Transverse colon (tissue), 4 donors: ENCODE measurements at regions of chr20 and their contacts with region 1.

Region 1: GRCh38 chr20:34558320-34559218 is at the start of gene MAP1LC3A:
- DNase-seq: peak; percentile 96
- H3K4me3 ChIP-seq: peak within 1 kb of the TSS; percentile 44 to 78 (median 60)
- H3K27ac ChIP-seq: peak within 1 kb of the TSS; percentile 84 to 93 (median 90)
- H3K4me1 ChIP-seq: peaks cover 4 to 15% (median 14%) of the 10 kb centered on the region in 4 donors
- H3K27me3 ChIP-seq: no peaks in the 10 kb centered on the region
- CTCF ChIP-seq: no peak
- EP300 ChIP-seq: no peak
- POLR2A ChIP-seq: peak; percentile 52
- total RNA-seq, gene MAP1LC3A: 41.8 to 166 (median 98.3) TPM

Region 2: DNA sequence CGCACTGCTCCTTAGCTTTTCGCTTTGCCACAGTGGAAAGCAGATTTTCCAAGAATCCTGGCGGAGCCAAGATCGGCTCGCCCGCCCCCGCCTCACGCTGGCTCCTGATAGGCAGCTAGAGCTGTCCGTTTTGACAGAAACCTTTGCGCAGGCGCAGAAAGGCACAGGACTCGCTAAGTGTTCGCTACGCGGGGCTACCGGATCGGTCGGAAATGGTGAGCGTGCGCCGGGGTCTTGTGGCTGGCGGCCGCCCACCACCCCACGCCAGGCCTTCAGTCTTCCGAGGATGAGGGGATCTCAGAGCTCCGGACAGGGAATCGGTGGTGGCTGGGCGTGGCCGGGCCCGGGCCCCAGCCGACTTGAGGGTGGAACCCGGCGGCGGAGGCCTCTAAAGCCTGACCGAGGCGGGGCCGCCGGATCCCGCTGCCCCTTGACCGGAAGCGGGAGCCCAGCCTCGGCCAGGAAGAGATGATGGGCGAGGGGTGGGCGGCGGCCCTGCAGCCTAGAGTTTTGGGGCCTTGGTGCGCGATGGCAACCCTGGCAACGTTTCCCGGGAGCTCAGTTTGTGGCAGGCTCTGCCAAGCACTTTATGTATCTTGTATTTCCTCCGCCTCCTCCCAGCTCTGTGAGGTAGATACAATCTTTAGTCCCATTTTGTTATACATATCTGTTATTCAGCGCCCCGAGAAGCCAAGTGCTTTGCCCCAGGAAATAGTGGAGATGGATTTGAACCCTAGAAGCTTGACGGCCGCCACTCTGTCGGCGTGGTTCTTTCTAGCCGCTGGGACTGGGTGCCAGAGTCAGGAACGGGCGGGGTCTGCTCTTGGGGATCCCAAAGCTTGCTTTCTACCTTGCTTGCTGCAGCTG is 42.1 kb before region 1 on chr20 and contains the start of gene DYNLRB1:
- in situ Hi-C with region 1: no loop called
- intact Hi-C with region 1: no loop called
- DNase-seq: peak; percentile 98
- H3K4me3 ChIP-seq: peak within 1 kb of the TSS; percentile 36 to 79 (median 65)
- H3K27ac ChIP-seq: peak within 1 kb of the TSS; percentile 92 to 95 (median 94)
- H3K4me1 ChIP-seq: peaks cover 6 to 45% (median 24%) of the 10 kb centered on the region in 4 donors
- H3K27me3 ChIP-seq: no peaks in the 10 kb centered on the region
- CTCF ChIP-seq: no peak
- EP300 ChIP-seq: no peak
- POLR2A ChIP-seq: peak; percentile 90
- total RNA-seq, gene DYNLRB1: 80.8 to 178 (median 120) TPM

Region 3: GRCh38 chr20:34704177-34705007 is 145.8 kb after region 1 on chr20 and contains the start of gene TP53INP2:
- in situ Hi-C with region 1: loop called in 2 of 4 experiments (anchors 25 kb)
- intact Hi-C with region 1: no loop called
- DNase-seq: peak; percentile 96
- H3K4me3 ChIP-seq: peak within 1 kb of the TSS; percentile 69 to 97 (median 78)
- H3K27ac ChIP-seq: peak within 1 kb of the TSS; percentile 98 to 100 (median 100)
- H3K4me1 ChIP-seq: peaks cover 16 to 47% (median 38%) of the 10 kb centered on the region in 4 donors
- H3K27me3 ChIP-seq: no peaks in the 10 kb centered on the region
- CTCF ChIP-seq: no peak
- EP300 ChIP-seq: no peak
- POLR2A ChIP-seq: peak; percentile 53
- total RNA-seq, gene TP53INP2: 12.9 to 80.8 (median 57.9) TPM

Region 4: GRCh38 chr20:34825530-34826362 is 267.2 kb after region 1 on chr20 and contains the start of gene NCOA6:
- in situ Hi-C with region 1: no loop called
- intact Hi-C with region 1: no loop called
- DNase-seq: peak; percentile 91
- H3K4me3 ChIP-seq: peak within 1 kb of the TSS; percentile 92 to 98 (median 96)
- H3K27ac ChIP-seq: peak within 1 kb of the TSS; percentile 93 to 97 (median 94)
- H3K4me1 ChIP-seq: peaks cover 0 to 43% (median 30%) of the 10 kb centered on the region in 4 donors
- H3K27me3 ChIP-seq: no peaks in the 10 kb centered on the region
- CTCF ChIP-seq: no peak
- EP300 ChIP-seq: no peak
- POLR2A ChIP-seq: no peak
- total RNA-seq, gene NCOA6: 34.8 to 81.8 (median 44.2) TPM